GM12878 (cell line): ENCODE measurements at regions of chr12 and their contacts with region 1.

Region 1: GRCh38 chr12:110583137-110584059 is at the start of gene PPTC7:
- DNase-seq: peak; percentile 91
- ATAC-seq: peak; percentile 85
- H3K4me3 ChIP-seq: peak within 1 kb of the TSS; percentile 82
- H3K27ac ChIP-seq: peak within 1 kb of the TSS; percentile 95
- H3K4me1 ChIP-seq: peaks cover 36% of the 10 kb centered on the region
- H3K27me3 ChIP-seq: no peaks in the 10 kb centered on the region
- CTCF ChIP-seq: no peak
- EP300 ChIP-seq: no peak
- POLR2A ChIP-seq: peak; percentile 72
- RAD21 ChIP-seq: no peak
- polyA plus RNA-seq, gene PPTC7: 5.0 to 8.9 TPM

Region 2: GRCh38 chr12:110543252-110543959 is 40.0 kb before region 1 on chr12:
- CTCF ChIA-PET with region 1: interaction called, 6 read pairs
- POLR2A ChIA-PET with region 1: interaction called, 28 read pairs
- RAD21 ChIA-PET with region 1: interaction called, 29 read pairs
- SMC1A ChIA-PET with region 1: interaction called, 308 read pairs
- in situ Hi-C with region 1: no loop called
- intact Hi-C with region 1: no loop called
- DNase-seq: peak; percentile 90
- ATAC-seq: peak; percentile 92
- H3K4me3 ChIP-seq: no peak overlapping the region; the same call in 1 of the 2 replicates
- H3K27ac ChIP-seq: peak overlapping the region; percentile 94
- H3K4me1 ChIP-seq: peaks cover 28% of the 10 kb centered on the region
- H3K27me3 ChIP-seq: no peaks in the 10 kb centered on the region
- CTCF ChIP-seq: no peak
- EP300 ChIP-seq: peak in 1 of 2 experiments; percentile 53; a peak in 1 of 4 replicates
- POLR2A ChIP-seq: 0 out of 2 replicates have a peak, but pooled peaks have one; percentile 26
- RAD21 ChIP-seq: no peak

Region 3: GRCh38 chr12:110555577-110556406 is 27.6 kb before region 1 on chr12:
- CTCF ChIA-PET with region 1: interaction called, 4 read pairs
- POLR2A ChIA-PET with region 1: no interaction called
- RAD21 ChIA-PET with region 1: interaction called, 7 read pairs
- SMC1A ChIA-PET with region 1: interaction called, 187 read pairs
- in situ Hi-C with region 1: no loop called
- intact Hi-C with region 1: no loop called
- DNase-seq: no peak
- ATAC-seq: no peak
- H3K4me3 ChIP-seq: no peak overlapping the region
- H3K27ac ChIP-seq: no peak overlapping the region
- H3K4me1 ChIP-seq: peaks cover 4% of the 10 kb centered on the region
- H3K27me3 ChIP-seq: no peaks in the 10 kb centered on the region
- CTCF ChIP-seq: no peak
- EP300 ChIP-seq: no peak
- POLR2A ChIP-seq: no peak
- RAD21 ChIP-seq: no peak

Region 4: DNA sequence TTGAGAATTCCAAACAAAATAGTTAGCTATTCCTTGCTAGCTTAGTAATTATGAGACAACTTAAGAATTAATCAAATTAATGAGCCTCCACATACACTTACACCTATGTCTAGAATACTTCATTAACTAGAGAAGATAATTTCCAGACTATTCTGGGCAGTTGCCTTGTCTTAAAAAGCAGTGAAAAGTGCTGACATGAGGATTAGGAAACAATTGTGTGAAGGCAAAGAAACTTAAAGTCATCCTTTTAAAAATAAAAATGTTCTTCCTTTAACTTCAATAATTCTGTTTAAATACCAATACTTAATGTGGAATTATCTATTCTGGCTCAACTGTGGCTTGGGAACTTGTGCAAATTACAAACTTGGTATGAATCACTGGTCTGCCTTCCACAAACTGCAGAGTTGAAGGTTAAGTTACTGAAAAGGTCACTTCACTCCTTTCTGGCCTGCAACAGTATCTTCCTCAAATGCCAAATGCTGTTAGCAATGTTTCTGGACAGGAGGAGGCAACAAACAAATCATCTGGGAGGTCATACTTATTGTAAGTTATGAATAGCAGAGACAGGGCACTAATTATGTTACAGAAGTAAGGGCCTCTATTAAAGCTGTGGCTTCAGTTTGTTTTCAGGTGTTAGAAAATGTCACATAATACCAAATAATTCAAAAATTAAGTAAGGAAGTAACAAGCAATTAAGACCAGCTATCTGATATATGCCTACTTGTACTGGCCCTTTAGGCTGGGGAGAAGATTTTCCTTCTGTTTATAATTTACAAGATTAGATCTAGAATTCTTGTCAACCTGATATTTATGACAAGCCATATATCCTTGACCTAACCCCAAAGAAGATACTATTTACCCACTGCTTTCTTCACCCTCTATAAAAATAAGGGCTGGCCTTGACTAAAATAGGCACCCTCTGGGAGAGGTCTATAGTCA is 19.4 kb before region 1 on chr12:
- CTCF ChIA-PET with region 1: interaction called, 15 read pairs
- POLR2A ChIA-PET with region 1: interaction called, 12 read pairs
- RAD21 ChIA-PET with region 1: interaction called, 18 read pairs
- SMC1A ChIA-PET with region 1: interaction called, 187 read pairs
- in situ Hi-C with region 1: no loop called
- intact Hi-C with region 1: no loop called
- DNase-seq: no peak
- ATAC-seq: peak; percentile 10; the same call in 1 of the 3 replicates
- H3K4me3 ChIP-seq: no peak overlapping the region
- H3K27ac ChIP-seq: peak overlapping the region; percentile 33; the same call in 1 of the 2 replicates
- H3K4me1 ChIP-seq: peaks cover 20% of the 10 kb centered on the region; the same call in 1 of the 2 replicates
- H3K27me3 ChIP-seq: no peaks in the 10 kb centered on the region
- CTCF ChIP-seq: no peak
- EP300 ChIP-seq: no peak
- POLR2A ChIP-seq: no peak
- RAD21 ChIP-seq: no peak